ENCODE measurements at regions of chr2 and their contacts with region 1.

Region 1: GRCh38 chr2:136238286-136239078 is 120.5 kb upstream of the CXCR4 start:
- DNase-seq: peak in 34 of 35 experiments; percentile 18 to 77 (median 37)
- ATAC-seq: peak; percentile 73 to 88 (median 78)
- H3K4me3 ChIP-seq: no peak overlapping the region
- H3K4me3 Mint-ChIP-seq: peak overlapping the region; percentile 6 to 38 (median 18)
- H3K27ac ChIP-seq: peak overlapping the region; percentile 93
- H3K27ac Mint-ChIP-seq: peak overlapping the region; percentile 92 to 93
- H3K4me1 ChIP-seq: peaks cover 5 to 41% of the 10 kb centered on the region in 2 experiments
- H3K4me1 Mint-ChIP-seq: peaks cover 52 to 81% (median 75%) of the 10 kb centered on the region in 3 donors
- H3K27me3 ChIP-seq: no peaks in the 10 kb centered on the region
- H3K27me3 Mint-ChIP-seq: no peaks in the 10 kb centered on the region

Region 2: GRCh38 chr2:136129601-136130000 is 108.9 kb before region 1 on chr2:
- CTCF ChIA-PET with region 1: no interaction called
- POLR2A ChIA-PET with region 1: interaction called, 3 to 16 read pairs
- DNase-seq: peak in 27 of 35 experiments; percentile 40 to 89 (median 61)
- ATAC-seq: peak; percentile 47 to 51 (median 50)
- H3K4me3 ChIP-seq: peak overlapping the region in 1 of 2 donors; percentile 16
- H3K4me3 Mint-ChIP-seq: peak overlapping the region; percentile 66 to 69 (median 68)
- H3K27ac ChIP-seq: peak overlapping the region; percentile 100
- H3K27ac Mint-ChIP-seq: peak overlapping the region; percentile 96 to 97
- H3K4me1 ChIP-seq: peaks cover 78 to 98% of the 10 kb centered on the region in 2 experiments
- H3K4me1 Mint-ChIP-seq: peaks cover 98 to 100% (median 99%) of the 10 kb centered on the region in 3 donors
- H3K27me3 ChIP-seq: no peaks in the 10 kb centered on the region
- H3K27me3 Mint-ChIP-seq: no peaks in the 10 kb centered on the region

Region 3: DNA sequence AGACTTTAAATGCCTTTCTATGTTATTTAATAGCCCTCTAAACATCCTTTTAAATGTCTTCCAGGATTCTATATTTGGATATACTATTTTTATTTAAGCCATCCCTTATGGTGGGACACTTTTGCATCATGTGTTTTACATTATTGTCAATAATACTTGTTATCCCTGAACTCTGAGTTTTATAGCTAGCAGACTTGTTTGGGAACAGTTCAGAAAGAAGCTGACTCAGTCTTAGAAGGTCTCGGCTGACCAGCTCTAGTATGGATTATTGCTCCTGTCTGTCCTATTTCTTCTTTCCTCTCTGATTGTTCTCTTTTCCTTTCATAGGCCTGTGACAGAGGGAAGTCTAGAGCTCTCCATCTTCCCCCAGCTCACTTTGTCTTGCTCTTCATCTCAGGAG is 43.3 kb before region 1 on chr2:
- CTCF ChIA-PET with region 1: no interaction called
- POLR2A ChIA-PET with region 1: no interaction called
- DNase-seq: no peak
- ATAC-seq: no peak
- H3K4me3 ChIP-seq: no peak overlapping the region
- H3K4me3 Mint-ChIP-seq: no peak overlapping the region
- H3K27ac ChIP-seq: no peak overlapping the region
- H3K27ac Mint-ChIP-seq: no peak overlapping the region
- H3K4me1 ChIP-seq: no peaks in the 10 kb centered on the region
- H3K4me1 Mint-ChIP-seq: peaks cover 0 to 16% (median 7%) of the 10 kb centered on the region in 3 donors
- H3K27me3 ChIP-seq: no peaks in the 10 kb centered on the region
- H3K27me3 Mint-ChIP-seq: no peaks in the 10 kb centered on the region

Region 4: GRCh38 chr2:136205615-136206014 is 32.9 kb before region 1 on chr2:
- CTCF ChIA-PET with region 1: no interaction called
- POLR2A ChIA-PET with region 1: no interaction called
- DNase-seq: no peak
- ATAC-seq: no peak
- H3K4me3 ChIP-seq: no peak overlapping the region
- H3K4me3 Mint-ChIP-seq: no peak overlapping the region
- H3K27ac ChIP-seq: no peak overlapping the region
- H3K27ac Mint-ChIP-seq: no peak overlapping the region
- H3K4me1 ChIP-seq: peaks cover 0 to 7% of the 10 kb centered on the region in 2 experiments
- H3K4me1 Mint-ChIP-seq: peaks cover 14 to 21% (median 17%) of the 10 kb centered on the region in 3 donors
- H3K27me3 ChIP-seq: no peaks in the 10 kb centered on the region
- H3K27me3 Mint-ChIP-seq: no peaks in the 10 kb centered on the region

Region 5: DNA sequence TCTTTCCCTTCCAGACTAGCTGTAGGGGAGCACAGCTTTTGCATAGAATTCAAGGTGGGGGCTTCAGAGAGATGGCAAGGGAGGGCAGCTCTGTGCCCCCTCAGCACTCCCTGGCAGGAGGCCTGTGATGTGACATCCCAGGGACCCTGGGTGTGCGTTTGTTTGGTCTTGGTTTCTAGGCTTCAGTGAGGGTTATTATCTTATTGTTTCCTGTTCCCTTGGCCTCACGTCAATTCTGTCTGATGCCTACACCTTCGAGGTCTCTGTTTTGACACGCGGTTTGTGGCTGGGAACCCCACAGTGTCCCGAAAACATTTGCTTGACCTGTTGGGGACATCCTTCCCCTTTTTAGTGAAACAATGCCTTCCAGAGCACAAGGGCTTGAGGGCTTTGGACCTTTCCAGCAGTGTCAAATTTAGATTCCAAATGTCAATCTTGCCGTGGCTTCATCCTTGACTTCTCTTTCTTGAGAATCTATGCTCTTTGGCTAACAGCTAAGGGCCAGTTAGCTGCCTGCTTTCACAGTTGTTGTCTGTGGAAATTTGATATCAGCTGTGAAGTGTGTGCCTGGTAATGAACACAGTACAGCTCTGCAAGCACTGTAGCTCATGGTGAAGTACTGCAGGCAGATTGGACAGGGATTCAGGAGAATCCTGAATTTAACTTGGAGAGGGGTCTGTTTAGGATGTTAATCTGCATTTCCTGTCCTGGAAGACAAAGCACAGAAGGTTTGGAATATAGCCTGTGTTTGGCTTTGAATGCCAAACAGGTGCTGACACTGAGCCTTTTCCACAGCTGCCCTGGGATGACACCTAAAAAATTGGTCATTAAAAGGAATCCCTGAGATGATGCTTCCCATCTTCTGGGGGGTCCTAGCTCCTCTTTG is 12.3 kb before region 1 on chr2:
- CTCF ChIA-PET with region 1: interaction called in 1 of 2 experiments, 19 read pairs
- POLR2A ChIA-PET with region 1: interaction called in 1 of 2 experiments, 20 read pairs
- DNase-seq: peak in 34 of 35 experiments; percentile 24 to 82 (median 56)
- ATAC-seq: peak; percentile 58 to 92 (median 75)
- H3K4me3 ChIP-seq: no peak overlapping the region
- H3K4me3 Mint-ChIP-seq: no peak overlapping the region
- H3K27ac ChIP-seq: peak overlapping the region; percentile 48
- H3K27ac Mint-ChIP-seq: peak overlapping the region; percentile 65 to 77
- H3K4me1 ChIP-seq: peaks cover 0 to 17% of the 10 kb centered on the region in 2 experiments
- H3K4me1 Mint-ChIP-seq: peaks cover 21 to 36% (median 26%) of the 10 kb centered on the region in 3 donors
- H3K27me3 ChIP-seq: no peaks in the 10 kb centered on the region
- H3K27me3 Mint-ChIP-seq: no peaks in the 10 kb centered on the region

Region 6: GRCh38 chr2:136281281-136282114 is 43.0 kb after region 1 on chr2:
- CTCF ChIA-PET with region 1: interaction called in 1 of 2 experiments, 7 read pairs
- POLR2A ChIA-PET with region 1: interaction called in 1 of 2 experiments, 10 read pairs
- DNase-seq: peak; percentile 18 to 88 (median 64)
- ATAC-seq: peak; percentile 77 to 90 (median 79)
- H3K4me3 ChIP-seq: no peak overlapping the region
- H3K4me3 Mint-ChIP-seq: peak overlapping the region; percentile 21 to 74 (median 31)
- H3K27ac ChIP-seq: peak overlapping the region; percentile 81
- H3K27ac Mint-ChIP-seq: peak overlapping the region; percentile 95
- H3K4me1 ChIP-seq: peaks cover 13 to 24% of the 10 kb centered on the region in 2 experiments
- H3K4me1 Mint-ChIP-seq: peaks cover 44 to 65% (median 47%) of the 10 kb centered on the region in 3 donors
- H3K27me3 ChIP-seq: no peaks in the 10 kb centered on the region
- H3K27me3 Mint-ChIP-seq: no peaks in the 10 kb centered on the region

Region 7: GRCh38 chr2:136291871-136292270 is 53.4 kb after region 1 on chr2:
- CTCF ChIA-PET with region 1: no interaction called
- POLR2A ChIA-PET with region 1: no interaction called
- DNase-seq: no peak
- ATAC-seq: no peak
- H3K4me3 ChIP-seq: no peak overlapping the region
- H3K4me3 Mint-ChIP-seq: no peak overlapping the region
- H3K27ac ChIP-seq: no peak overlapping the region
- H3K27ac Mint-ChIP-seq: no peak overlapping the region
- H3K4me1 ChIP-seq: no peaks in the 10 kb centered on the region
- H3K4me1 Mint-ChIP-seq: peaks cover 9 to 13% (median 10%) of the 10 kb centered on the region in 3 donors
- H3K27me3 ChIP-seq: no peaks in the 10 kb centered on the region
- H3K27me3 Mint-ChIP-seq: no peaks in the 10 kb centered on the region

Region 8: DNA sequence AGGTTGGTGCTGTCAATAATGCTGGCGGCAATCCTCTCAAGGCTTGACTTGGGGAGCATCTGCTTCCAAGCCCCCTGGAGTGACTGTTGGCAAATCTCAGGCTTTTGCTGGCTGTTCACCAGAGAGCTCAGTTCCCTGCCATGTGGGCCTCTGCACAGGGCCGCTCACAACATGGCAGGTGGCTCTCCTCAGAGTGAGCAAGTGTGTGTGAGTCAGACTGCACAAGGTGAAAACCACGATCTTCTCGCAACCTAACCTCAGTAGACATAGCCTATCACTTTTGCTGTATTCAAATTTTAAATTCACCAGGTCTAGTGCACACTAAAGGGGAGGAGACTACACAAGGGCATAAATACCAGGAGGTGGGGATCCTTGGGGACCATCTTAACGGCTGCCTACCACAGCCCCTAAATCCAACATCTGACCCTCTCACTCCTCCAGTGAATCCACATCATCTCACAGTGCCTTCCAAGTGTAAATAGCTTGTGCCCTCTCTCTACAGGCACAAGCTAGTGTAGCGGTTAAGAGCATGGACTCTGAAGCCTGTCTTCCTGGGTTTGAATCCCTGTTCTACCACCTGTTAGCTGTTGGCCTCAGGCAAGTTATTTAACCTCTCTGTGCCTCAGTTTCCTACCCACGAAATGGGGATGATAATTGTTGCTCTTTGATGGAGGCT is 67.2 kb after region 1 on chr2:
- CTCF ChIA-PET with region 1: no interaction called
- POLR2A ChIA-PET with region 1: no interaction called
- DNase-seq: peak in 32 of 35 experiments; percentile 6 to 72 (median 28)
- ATAC-seq: peak; percentile 85 to 99 (median 94)
- H3K4me3 ChIP-seq: no peak overlapping the region
- H3K4me3 Mint-ChIP-seq: no peak overlapping the region
- H3K27ac ChIP-seq: no peak overlapping the region
- H3K27ac Mint-ChIP-seq: peak overlapping the region; percentile 44 to 73
- H3K4me1 ChIP-seq: peaks cover 0 to 13% of the 10 kb centered on the region in 2 experiments
- H3K4me1 Mint-ChIP-seq: peaks cover 12 to 27% (median 24%) of the 10 kb centered on the region in 3 donors
- H3K27me3 ChIP-seq: no peaks in the 10 kb centered on the region
- H3K27me3 Mint-ChIP-seq: no peaks in the 10 kb centered on the region

Region 9: GRCh38 chr2:136327162-136327852 is 88.8 kb after region 1 on chr2:
- CTCF ChIA-PET with region 1: interaction called in 1 of 2 experiments, 12 read pairs
- POLR2A ChIA-PET with region 1: interaction called, 3 to 11 read pairs
- DNase-seq: peak; percentile 57 to 94 (median 82)
- ATAC-seq: peak; percentile 93 to 98 (median 96)
- H3K4me3 ChIP-seq: peak overlapping the region; percentile 29 to 41
- H3K4me3 Mint-ChIP-seq: peak overlapping the region; percentile 69 to 86 (median 75)
- H3K27ac ChIP-seq: peak overlapping the region; percentile 97
- H3K27ac Mint-ChIP-seq: peak overlapping the region; percentile 97 to 98
- H3K4me1 ChIP-seq: peaks cover 29% of the 10 kb centered on the region in 2 experiments
- H3K4me1 Mint-ChIP-seq: peaks cover 63 to 70% (median 69%) of the 10 kb centered on the region in 3 donors
- H3K27me3 ChIP-seq: no peaks in the 10 kb centered on the region
- H3K27me3 Mint-ChIP-seq: no peaks in the 10 kb centered on the region